IMR-90 (cell line): ENCODE measurements at regions of chrX and their contacts with region 1.

Region 1: GRCh38 chrX:42755820-42756219 is 22.1 kb downstream of the PPP1R2C start:
- DNase-seq: peak; percentile 42
- ATAC-seq: no peak
- H3K4me3 ChIP-seq: no peak overlapping the region
- H3K27ac ChIP-seq: no peak overlapping the region
- H3K4me1 ChIP-seq: no peaks in the 10 kb centered on the region
- H3K27me3 ChIP-seq: no peaks in the 10 kb centered on the region
- CTCF ChIP-seq: no peak
- POLR2A ChIP-seq: no peak
- RAD21 ChIP-seq: no peak

Region 2: DNA sequence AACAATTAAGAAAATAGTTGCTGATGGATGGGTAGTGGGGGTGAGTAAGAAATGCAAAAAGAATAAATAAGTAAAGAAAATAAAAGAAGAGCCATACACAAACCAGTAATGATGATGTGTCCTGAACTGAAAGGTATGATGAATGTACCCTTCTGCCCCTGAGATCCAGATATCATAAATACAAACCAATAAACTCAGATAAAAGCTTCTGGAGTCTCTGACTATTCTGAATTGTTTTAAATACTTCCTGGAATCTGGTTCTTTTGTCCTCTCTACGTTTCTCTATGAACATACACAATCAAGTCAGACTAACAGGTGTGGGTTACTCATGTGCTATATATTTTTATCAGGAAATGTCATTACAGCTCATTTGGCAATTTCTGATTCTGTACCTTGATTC is 131.3 kb before region 1 on chrX:
- CTCF ChIA-PET with region 1: no interaction called
- POLR2A ChIA-PET with region 1: no interaction called
- dilution Hi-C with region 1: no loop called
- in situ Hi-C with region 1: no loop called
- intact Hi-C with region 1: no loop called
- DNase-seq: no peak
- ATAC-seq: no peak
- H3K4me3 ChIP-seq: no peak overlapping the region
- H3K27ac ChIP-seq: no peak overlapping the region
- H3K4me1 ChIP-seq: no peaks in the 10 kb centered on the region
- H3K27me3 ChIP-seq: no peaks in the 10 kb centered on the region; the same call in 1 of the 2 replicates
- CTCF ChIP-seq: no peak
- POLR2A ChIP-seq: no peak
- RAD21 ChIP-seq: no peak

Region 3: GRCh38 chrX:42869659-42870476 is 114.0 kb after region 1 on chrX:
- CTCF ChIA-PET with region 1: no interaction called
- POLR2A ChIA-PET with region 1: no interaction called
- dilution Hi-C with region 1: no loop called
- in situ Hi-C with region 1: no loop called
- intact Hi-C with region 1: loop called (anchors 1 kb)
- DNase-seq: no peak
- ATAC-seq: no peak
- H3K4me3 ChIP-seq: no peak overlapping the region
- H3K27ac ChIP-seq: no peak overlapping the region
- H3K4me1 ChIP-seq: no peaks in the 10 kb centered on the region
- H3K27me3 ChIP-seq: no peaks in the 10 kb centered on the region
- CTCF ChIP-seq: no peak
- POLR2A ChIP-seq: no peak
- RAD21 ChIP-seq: no peak

Region 4: DNA sequence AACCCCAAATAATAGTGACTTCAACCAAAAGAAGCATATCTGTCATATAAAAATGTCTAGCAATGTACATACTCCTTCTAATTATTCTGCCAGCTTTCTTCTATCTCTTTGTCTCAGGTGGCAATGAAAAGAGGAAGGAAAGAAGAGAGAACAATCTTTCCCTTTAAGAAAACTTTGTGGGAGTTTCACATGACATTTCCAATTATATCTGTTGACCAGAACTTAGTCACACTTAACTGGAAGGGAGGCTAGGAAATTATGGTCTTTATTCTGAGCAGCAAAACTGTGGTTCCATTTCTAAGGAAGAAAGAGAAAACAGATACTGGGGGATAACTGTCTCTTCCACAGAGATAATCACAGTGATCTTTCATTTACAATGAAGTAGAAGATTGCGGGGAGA is 887.4 kb after region 1 on chrX:
- CTCF ChIA-PET with region 1: no interaction called
- POLR2A ChIA-PET with region 1: no interaction called
- dilution Hi-C with region 1: no loop called
- in situ Hi-C with region 1: no loop called
- intact Hi-C with region 1: no loop called
- DNase-seq: no peak
- ATAC-seq: no peak
- H3K4me3 ChIP-seq: no peak overlapping the region
- H3K27ac ChIP-seq: no peak overlapping the region
- H3K4me1 ChIP-seq: no peaks in the 10 kb centered on the region
- H3K27me3 ChIP-seq: no peaks in the 10 kb centered on the region; the same call in none of the 2 replicates
- CTCF ChIP-seq: no peak
- POLR2A ChIP-seq: no peak
- RAD21 ChIP-seq: no peak